PC-9 (cell line): ENCODE measurements at regions of chr14 and their contacts with region 1.

Region 1: DNA sequence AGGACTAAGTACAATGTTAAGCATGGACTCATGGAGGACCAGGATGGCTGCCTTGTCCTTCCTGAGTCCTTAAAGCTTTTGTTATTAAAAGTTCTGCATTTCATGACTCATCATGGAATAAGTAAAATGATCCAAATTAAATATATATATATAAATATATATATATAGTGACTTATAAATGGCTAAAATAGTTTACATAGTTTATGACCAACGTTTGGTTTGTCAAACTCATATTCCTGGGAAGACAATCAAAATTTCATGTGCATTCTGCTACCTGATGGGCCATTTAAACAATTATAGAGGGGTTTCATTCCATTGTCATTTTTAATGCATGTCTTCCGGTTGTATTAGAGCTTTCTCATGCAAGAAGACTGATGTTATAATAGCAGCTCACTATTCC is 1190.7 kb downstream of the FSCB start:
- DNase-seq: no peak
- H3K4me3 ChIP-seq: no peak overlapping the region
- H3K27ac ChIP-seq: no peak overlapping the region
- H3K4me1 ChIP-seq: no peaks in the 10 kb centered on the region
- H3K27me3 ChIP-seq: no peaks in the 10 kb centered on the region
- CTCF ChIP-seq: no peak

Region 2: GRCh38 chr14:43503590-43503907 is 187.1 kb after region 1 on chr14:
- CTCF ChIA-PET with region 1: interaction called, 10 read pairs
- POLR2A ChIA-PET with region 1: no interaction called
- intact Hi-C with region 1: no loop called
- DNase-seq: no peak
- H3K4me3 ChIP-seq: no peak overlapping the region
- H3K27ac ChIP-seq: no peak overlapping the region
- H3K4me1 ChIP-seq: no peaks in the 10 kb centered on the region
- H3K27me3 ChIP-seq: no peaks in the 10 kb centered on the region
- CTCF ChIP-seq: peak; percentile 40; the same call in 1 of the 2 replicates

Region 3: GRCh38 chr14:43621282-43621681 is 304.9 kb after region 1 on chr14:
- CTCF ChIA-PET with region 1: no interaction called
- POLR2A ChIA-PET with region 1: no interaction called
- intact Hi-C with region 1: no loop called
- DNase-seq: no peak
- H3K4me3 ChIP-seq: no peak overlapping the region
- H3K27ac ChIP-seq: no peak overlapping the region
- H3K4me1 ChIP-seq: no peaks in the 10 kb centered on the region
- H3K27me3 ChIP-seq: no peaks in the 10 kb centered on the region
- CTCF ChIP-seq: no peak